Breast epithelium (tissue), 4 donors: ENCODE measurements at regions of chr1 and their contacts with region 1.

Region 1: DNA sequence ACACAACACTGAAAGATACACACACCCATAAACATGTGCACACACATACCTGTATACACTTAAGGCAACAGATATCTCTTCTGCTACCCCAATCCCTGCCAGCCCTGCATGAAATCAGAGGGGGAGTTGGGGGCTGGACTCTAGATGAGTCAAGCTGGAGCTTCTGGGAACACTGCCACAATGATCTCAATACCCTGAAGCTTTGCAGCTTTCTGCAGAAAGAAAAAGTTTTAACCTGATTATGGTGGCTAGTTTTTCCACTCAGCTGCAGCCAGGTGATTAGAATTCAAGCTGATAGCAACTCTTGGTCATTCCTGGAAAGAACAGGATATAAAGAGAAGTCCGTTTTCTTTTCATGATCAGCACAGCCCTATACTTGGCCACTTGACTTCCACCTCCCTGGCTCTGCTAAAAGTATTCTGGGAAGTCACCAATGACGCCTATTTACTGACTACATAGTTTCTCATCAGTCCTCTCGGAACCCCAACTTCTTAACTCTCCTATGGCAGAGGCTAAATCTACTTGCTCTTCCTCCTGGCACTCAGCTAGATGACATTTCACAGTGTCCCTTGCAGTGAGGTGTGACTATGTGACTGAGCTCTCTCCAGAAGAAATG is 20.7 kb upstream of the DNASE2B start:
- DNase-seq: no peak
- H3K4me3 ChIP-seq: no peak overlapping the region
- H3K27ac ChIP-seq: peak overlapping the region in 1 of 2 donors; percentile 76
- H3K4me1 ChIP-seq: no peaks in the 10 kb centered on the region
- H3K27me3 ChIP-seq: no peaks in the 10 kb centered on the region
- CTCF ChIP-seq: no peak
- POLR2A ChIP-seq: no peak

Region 2: DNA sequence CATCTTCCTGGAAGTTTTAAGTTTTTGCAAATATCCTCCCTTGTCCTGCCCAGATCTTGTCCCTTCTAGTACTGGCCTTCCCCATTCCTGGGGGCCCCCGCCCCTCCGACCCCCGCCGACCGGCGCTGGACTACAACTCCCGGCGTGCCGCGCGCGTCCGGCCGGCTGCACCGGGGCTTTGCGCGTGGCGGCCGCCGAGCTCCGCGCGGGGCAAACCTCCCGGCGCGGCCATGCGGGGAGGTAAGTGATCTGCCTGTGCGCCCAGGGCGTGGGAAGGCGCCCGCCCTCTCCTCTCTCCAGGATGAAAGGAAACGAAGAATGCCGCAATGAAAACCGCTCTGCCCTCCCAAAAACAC is 79.3 kb before region 1 on chr1:
- intact Hi-C with region 1: no loop called
- DNase-seq: no peak
- H3K4me3 ChIP-seq: peak overlapping the region; percentile 74 to 93 (median 77)
- H3K27ac ChIP-seq: peak overlapping the region; percentile 93 to 94
- H3K4me1 ChIP-seq: peaks cover 0 to 4% of the 10 kb centered on the region in 2 donors
- H3K27me3 ChIP-seq: no peaks in the 10 kb centered on the region
- CTCF ChIP-seq: no peak
- POLR2A ChIP-seq: no peak

Region 3: GRCh38 chr1:84353695-84354094 is 23.9 kb before region 1 on chr1:
- intact Hi-C with region 1: no loop called
- DNase-seq: no peak
- H3K4me3 ChIP-seq: no peak overlapping the region
- H3K27ac ChIP-seq: peak overlapping the region in 1 of 2 donors; percentile 29
- H3K4me1 ChIP-seq: no peaks in the 10 kb centered on the region
- H3K27me3 ChIP-seq: no peaks in the 10 kb centered on the region
- CTCF ChIP-seq: no peak
- POLR2A ChIP-seq: no peak

Region 4: DNA sequence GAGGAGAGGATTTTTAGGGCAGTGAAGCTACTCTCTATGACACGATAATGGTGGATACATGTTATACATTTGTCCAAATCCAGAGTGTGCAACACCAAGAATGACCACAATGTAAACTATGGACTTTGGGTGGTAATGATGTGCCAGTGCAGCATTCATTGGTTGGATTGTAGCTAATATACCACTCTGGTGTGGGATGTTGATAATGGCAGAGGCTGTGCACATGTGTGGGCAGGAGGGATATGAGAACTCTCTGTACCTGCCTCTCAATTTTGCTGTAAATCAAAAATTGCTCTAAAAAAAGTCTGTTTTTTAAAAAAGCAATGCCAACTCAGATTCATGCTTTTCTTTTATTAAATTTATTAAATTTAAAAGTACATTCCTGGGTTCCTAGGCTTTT is 542.6 kb after region 1 on chr1:
- intact Hi-C with region 1: loop called (anchors 5 kb)
- DNase-seq: no peak
- H3K4me3 ChIP-seq: no peak overlapping the region
- H3K27ac ChIP-seq: no peak overlapping the region
- H3K4me1 ChIP-seq: no peaks in the 10 kb centered on the region
- H3K27me3 ChIP-seq: no peaks in the 10 kb centered on the region
- CTCF ChIP-seq: no peak
- POLR2A ChIP-seq: no peak